HEK293 (cell line): ENCODE measurements at regions of chr5 and their contacts with region 1.

Region 1: DNA sequence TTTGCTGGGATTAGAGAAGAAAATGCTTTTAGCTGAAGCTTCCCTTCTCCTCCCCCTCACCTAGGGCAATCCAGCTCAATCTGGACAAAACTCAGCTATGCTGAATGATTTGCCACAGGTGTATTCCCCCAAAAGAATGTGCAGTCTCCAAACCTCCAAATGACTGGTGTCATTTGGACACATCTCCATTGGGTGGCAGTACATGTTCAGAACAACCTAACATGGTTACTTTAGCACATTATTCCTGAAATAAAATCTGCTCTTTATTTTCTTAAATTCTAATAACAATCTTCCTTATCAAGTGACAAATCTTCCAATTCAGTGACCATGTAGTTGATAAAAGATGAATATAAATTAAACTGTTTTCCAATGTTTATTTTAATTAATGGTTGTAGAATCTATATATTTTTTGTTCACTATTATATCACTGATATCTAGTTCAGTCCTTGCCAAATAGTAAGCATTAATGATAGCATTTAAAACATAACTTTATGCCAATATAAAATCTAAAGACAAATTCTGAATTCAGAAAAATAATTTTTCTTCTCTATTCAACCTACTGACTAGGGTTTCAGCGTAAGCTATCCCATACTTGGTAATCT is 61.3 kb upstream of the MOCS2 start:
- H3K4me3 ChIP-seq: no peak overlapping the region
- H3K27ac ChIP-seq: no peak overlapping the region
- H3K4me1 ChIP-seq: no peaks in the 10 kb centered on the region
- CTCF ChIP-seq: peak; percentile 57; the same call in 1 of the 2 replicates

Region 2: GRCh38 chr5:52925001-52925400 is 245.8 kb before region 1 on chr5:
- CTCF ChIA-PET with region 1: no interaction called
- POLR2A ChIA-PET with region 1: no interaction called
- H3K4me3 ChIP-seq: no peak overlapping the region
- H3K27ac ChIP-seq: no peak overlapping the region
- H3K4me1 ChIP-seq: peaks cover 3% of the 10 kb centered on the region; the same call in 1 of the 2 replicates
- CTCF ChIP-seq: no peak

Region 3: GRCh38 chr5:53151713-53152458 is 19.0 kb before region 1 on chr5:
- CTCF ChIA-PET with region 1: no interaction called
- POLR2A ChIA-PET with region 1: no interaction called
- H3K4me3 ChIP-seq: no peak overlapping the region
- H3K27ac ChIP-seq: no peak overlapping the region
- H3K4me1 ChIP-seq: no peaks in the 10 kb centered on the region
- CTCF ChIP-seq: no peak

Region 4: DNA sequence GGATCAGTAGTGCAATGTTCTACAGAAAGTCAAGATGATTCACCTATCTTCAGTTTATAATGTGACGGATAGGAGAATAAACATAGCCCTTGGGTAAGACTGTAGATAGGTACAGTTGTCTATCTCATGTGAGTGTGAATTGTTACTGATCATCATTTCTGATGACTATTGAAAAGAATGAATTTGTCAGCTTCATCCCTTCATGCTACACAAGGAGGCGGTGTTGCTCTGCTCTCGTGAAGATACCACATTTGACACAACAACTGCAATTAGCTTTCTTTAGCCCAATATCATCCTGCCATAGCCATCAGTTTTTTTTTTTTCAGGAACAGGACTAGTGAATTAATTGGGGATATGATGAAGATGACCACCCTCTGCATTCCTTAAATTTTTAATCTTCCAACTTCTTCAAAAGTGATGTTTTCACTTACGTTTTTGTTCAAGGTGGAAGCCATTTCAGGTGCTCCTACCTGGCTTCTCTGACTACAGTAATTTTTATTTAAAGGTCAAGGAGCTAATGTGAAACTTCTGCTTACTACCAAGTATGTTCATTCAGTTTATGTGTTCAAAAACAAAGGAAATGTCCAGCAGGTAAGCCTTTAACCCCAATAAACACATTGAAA is 91.6 kb after region 1 on chr5:
- CTCF ChIA-PET with region 1: interaction called, 10 read pairs
- POLR2A ChIA-PET with region 1: no interaction called
- H3K4me3 ChIP-seq: no peak overlapping the region
- H3K27ac ChIP-seq: no peak overlapping the region
- H3K4me1 ChIP-seq: no peaks in the 10 kb centered on the region
- CTCF ChIP-seq: no peak

Region 5: DNA sequence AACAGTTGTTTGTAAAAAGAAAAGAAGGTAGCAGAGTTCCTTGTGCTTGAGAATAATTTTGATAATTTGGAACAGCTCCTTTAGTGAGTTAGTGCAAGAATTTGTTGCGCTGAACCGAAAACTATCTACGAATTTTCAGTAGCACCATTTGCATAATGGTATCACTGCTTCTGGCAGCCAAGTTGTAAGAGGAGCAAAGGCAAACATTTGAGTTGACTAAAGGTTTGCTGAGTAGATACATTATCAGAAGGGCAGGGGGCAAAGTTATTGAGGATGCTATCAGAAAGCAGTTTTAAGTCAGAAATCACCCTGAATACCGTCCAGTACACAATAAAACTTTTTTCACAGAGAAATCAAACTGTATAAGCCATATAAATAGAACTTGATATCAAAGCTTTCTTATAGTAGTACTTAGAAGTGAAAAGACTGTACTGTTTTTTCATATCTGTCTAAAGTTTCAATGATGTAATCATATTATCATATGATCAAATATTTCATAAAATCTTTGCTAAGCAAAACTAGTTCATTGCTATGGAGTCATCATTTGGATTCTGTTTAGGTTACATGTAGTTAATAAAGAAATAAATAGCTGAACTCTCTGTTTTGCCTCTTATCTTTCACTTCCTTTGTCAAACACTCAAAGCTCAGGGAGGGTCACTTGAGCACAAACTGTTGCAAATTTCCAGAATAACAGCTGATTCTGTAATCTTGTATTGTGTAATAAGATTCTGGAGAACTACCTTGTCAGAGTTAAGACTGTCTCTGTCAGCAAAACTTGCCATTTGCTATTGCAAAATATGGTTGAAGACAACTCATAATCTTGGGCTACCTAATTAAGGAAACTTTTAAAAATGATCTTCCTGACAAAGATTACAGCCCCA is 120.4 kb after region 1 on chr5:
- CTCF ChIA-PET with region 1: interaction called, 10 read pairs
- POLR2A ChIA-PET with region 1: no interaction called
- H3K4me3 ChIP-seq: no peak overlapping the region
- H3K27ac ChIP-seq: no peak overlapping the region
- H3K4me1 ChIP-seq: no peaks in the 10 kb centered on the region
- CTCF ChIP-seq: no peak

Region 6: DNA sequence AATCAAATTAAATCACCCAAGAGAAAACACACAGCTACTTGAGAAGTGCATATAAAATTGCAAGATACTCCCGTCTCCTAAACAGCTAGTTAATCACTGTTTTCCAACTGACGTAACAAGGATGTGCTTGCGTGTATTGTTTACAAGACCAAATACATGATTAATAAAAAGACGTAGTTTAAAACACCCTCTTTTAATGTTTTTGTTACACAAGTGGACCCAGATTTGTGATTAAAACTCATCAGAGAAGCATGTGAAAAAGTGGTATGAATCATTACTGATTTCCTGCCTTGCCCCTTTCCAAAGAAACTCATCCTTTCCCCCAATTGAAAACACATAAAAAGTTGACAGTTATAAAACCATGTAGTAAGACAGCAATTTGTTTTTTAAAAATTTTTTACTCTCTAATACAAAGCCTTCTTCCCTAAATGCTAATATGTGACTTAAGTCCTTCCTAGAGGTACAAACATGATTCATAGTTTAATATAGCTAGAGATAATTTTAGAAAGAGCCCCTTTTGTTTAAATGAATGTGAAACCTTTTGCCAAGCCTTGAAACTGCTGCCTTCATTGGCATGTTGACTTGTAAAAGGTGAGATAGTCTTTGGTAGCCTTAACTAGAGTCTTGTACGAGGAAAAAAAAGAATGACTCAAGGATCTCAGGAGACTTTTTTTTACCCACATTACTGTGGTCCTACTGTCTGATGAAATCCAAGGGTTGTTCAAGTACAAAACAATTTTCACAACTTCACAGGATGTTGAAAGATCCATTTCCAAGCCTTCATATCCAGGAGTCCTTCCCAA is 248.2 kb after region 1 on chr5:
- CTCF ChIA-PET with region 1: no interaction called
- POLR2A ChIA-PET with region 1: no interaction called
- H3K4me3 ChIP-seq: no peak overlapping the region
- H3K27ac ChIP-seq: no peak overlapping the region
- H3K4me1 ChIP-seq: no peaks in the 10 kb centered on the region
- CTCF ChIP-seq: no peak